ENCODE measurements at regions of chr19 and their contacts with region 1.

Region 1: GRCh38 chr19:48110350-48110966 is at the start of gene PLA2G4C:
- DNase-seq: peak; percentile 96
- CTCF ChIP-seq: no peak

Region 2: DNA sequence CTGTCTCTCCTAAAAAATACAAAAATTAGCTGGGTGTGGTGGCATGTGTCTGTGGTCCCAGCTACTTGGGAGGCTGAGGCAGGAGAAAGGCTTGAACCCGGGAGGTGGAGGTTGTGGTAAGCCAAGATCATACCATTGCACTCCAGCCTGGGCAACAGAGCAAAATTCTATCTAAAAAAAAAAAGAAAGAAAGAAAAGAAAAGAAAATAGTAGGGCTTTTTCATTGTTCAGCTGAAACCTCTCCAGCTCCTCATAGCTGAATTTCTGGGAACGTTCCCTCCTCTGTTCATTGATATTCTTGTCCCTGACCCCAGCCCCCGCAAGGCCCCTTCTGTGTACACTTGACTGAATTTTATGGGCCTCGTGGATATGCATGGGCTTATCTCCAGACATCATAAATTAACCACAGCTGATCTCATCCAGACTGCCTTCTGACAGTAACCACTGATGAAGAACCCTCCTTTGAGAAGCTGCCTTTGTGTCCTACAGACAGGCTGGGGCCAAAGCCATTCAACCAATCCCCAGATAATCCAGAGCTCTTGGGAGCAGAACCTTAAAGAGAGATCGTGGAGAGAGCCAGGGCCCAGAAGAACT is 116.2 kb before region 1 on chr19 and contains the start of gene ELSPBP1:
- CTCF ChIA-PET with region 1: no interaction called
- POLR2A ChIA-PET with region 1: no interaction called
- DNase-seq: no peak
- CTCF ChIP-seq: no peak

Region 3: DNA sequence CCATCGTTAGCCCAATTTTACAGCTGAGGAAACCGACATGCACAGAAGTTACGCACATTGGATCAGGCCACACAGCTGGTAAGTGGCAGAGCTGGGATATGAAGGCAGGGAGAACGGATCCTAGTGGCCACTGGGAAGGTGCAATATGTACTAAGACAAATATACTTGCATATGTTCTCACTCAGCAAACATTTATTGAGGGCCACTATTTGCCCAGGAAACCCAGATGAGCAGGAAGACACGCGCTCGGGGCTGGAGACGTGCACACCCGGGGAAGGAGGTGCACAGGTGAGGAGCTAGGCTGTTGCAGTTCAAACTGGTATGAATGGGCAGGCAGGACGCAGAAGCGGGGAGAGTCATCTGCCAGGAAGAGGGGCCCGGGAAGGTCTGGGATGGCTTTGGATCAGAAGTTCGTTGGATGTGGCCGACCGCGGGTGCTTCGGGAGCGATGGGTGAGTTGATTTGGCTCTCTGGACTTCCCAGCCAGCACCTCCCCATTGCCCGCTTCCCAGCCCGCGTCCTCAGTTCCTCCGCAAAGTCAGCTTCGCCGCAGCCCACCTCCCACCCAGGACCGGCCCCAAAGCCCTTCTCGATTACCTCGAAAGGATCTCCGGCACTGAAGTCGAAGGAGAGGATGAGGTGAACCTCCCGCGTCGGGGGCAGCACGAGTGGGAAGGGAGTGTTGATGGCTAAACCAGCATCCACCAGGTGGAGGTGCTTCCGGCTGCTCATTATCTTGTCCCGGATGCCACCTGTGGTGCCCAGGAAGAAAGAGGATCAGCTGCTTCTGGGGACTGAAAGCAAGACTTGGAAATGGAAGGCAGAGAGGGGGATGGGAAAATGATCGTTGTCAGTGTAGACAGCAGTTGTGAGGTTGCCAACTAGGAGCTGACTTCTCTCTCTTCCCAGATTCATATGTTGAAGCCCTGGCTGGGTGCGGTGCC is 48.8 kb before region 1 on chr19:
- CTCF ChIA-PET with region 1: no interaction called
- POLR2A ChIA-PET with region 1: no interaction called
- DNase-seq: no peak
- CTCF ChIP-seq: no peak

Region 4: GRCh38 chr19:48123907-48124651 is 13.6 kb after region 1 on chr19:
- CTCF ChIA-PET with region 1: interaction called, 27 read pairs
- POLR2A ChIA-PET with region 1: interaction called, 6 read pairs
- DNase-seq: peak; percentile 62
- CTCF ChIP-seq: no peak

Region 5: DNA sequence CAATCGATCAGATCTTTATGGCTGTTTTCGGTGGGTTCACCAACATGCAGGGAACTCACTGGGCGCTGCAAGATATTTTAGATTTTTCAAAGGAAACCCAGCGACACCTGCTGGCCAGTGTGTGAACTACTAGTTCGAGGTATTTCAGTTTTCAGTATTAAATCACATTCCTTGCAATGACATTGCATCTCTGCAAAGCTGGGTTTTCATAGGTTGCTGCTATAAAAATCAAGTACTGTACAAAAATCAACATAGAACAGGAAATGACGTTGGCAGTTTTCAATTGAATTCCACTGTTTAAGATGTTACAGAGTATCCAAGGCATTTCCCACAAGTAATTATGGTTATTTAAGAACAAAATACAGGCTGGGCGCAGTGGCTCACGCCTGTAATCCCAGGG is 42.1 kb after region 1 on chr19:
- CTCF ChIA-PET with region 1: interaction called, 88 read pairs
- POLR2A ChIA-PET with region 1: no interaction called
- DNase-seq: peak; percentile 72
- CTCF ChIP-seq: peak; percentile 82

Region 6: GRCh38 chr19:48170038-48170812 is 59.8 kb after region 1 on chr19 and contains the starts of genes LIG1 and ZSWIM9:
- CTCF ChIA-PET with region 1: no interaction called
- POLR2A ChIA-PET with region 1: no interaction called
- DNase-seq: peak; percentile 95
- CTCF ChIP-seq: no peak

Measured in GM10248 (cell line).